Heart left ventricle (tissue), 16 donors: ENCODE measurements at regions of chr14 and their contacts with region 1.

Region 1: DNA sequence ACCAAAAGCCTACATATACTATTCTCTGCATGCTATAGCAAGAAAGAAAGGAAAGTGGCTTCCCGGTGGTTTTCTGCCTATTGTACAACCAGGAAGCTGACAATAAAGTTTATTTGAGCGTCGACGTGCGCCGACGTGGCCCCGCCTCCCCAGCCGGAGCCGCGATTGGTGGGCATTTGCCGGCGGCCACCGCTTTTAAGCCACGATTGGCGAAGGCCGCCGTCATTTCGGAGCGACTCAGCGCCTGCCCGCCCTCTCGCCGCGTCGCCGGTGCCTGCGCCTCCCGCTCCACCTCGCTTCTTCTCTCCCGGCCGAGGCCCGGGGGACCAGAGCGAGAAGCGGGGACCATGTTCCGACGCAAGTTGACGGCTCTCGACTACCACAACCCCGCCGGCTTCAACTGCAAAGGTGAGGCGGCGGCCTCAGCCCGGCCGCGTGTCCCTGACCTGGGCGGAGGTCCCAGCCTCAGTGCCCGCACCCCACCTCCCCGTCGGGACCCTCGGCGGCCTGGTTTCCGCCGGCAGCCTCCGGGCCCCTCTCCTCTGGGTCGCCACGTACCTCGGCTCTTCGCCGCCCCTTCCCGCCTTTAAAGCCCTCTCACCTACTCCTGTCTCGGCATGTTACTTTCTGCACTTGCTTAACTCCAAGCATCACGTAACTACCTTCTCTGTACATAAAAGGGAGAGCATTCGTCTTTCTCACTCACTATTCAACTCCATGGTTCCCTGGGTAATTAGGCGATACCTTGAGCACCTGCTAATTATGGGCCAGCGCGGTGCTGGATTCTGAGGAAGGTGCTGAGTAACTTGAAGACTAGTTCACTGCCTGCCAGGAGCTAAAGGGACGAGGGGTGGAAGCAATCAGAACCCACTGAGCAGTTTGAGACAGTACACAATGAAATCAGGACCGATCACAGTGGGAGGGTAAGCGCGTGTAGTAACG is at the start of gene RTRAF:
- DNase-seq: peak; percentile 96 to 97 (median 96)
- ATAC-seq: peak; percentile 97 to 100 (median 99)
- H3K4me3 ChIP-seq: peak within 1 kb of the TSS; percentile 58 to 98 (median 88)
- H3K27ac ChIP-seq: peak within 1 kb of the TSS; percentile 60 to 93 (median 86)
- H3K4me1 ChIP-seq: peaks cover 0 to 51% (median 27%) of the 10 kb centered on the region in 12 donors
- H3K27me3 ChIP-seq: no peaks in the 10 kb centered on the region
- CTCF ChIP-seq: peak in 1 of 12 donors; percentile 16
- POLR2A ChIP-seq: peak; percentile 49 to 90
- total RNA-seq, gene RTRAF: 72.9 to 260 (median 193) TPM

Region 2: DNA sequence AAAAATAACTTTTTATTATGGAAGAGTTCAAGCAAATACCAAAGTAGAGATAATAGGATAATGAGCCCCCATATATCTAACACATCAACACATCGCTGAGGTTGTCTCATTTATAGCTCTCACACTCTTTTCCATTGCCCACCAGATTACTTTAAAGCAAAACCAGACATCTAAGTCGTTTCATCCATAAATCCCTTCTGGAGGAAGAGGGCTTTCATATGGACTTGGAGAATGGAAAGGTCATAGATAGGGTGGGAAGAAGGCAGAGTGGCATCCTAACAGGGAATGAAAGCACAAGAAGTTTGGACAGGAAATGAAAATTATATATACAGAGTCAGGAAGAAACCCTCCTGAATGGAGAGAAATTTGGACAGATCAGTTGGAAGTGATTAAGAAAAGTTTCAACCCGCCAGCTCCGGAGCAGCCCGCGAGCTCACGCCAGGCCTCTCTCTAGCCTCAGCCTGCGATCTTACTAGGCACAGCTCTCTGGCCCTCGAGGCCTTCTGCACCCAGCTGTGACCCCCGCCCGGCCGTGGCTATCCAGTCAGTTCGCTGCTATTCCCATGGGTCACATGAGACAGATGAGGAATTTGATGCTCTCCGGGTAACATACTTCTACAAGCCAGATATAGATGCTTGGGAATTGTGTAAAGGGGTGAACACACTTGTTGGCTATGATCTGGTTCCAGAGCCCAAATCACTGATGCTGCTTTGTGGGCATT is 127.7 kb after region 1 on chr14:
- intact Hi-C with region 1: no loop called
- DNase-seq: peak in 3 of 5 donors; percentile 38 to 64 (median 61)
- ATAC-seq: peak in 1 of 4 donors; percentile 55
- H3K4me3 ChIP-seq: no peak overlapping the region
- H3K27ac ChIP-seq: peak overlapping the region in 2 of 12 donors; percentile 5 to 38
- H3K4me1 ChIP-seq: no peaks in the 10 kb centered on the region
- H3K27me3 ChIP-seq: no peaks in the 10 kb centered on the region
- CTCF ChIP-seq: no peak
- POLR2A ChIP-seq: no peak

Region 3: GRCh38 chr14:52131640-52132320 is 142.2 kb after region 1 on chr14:
- intact Hi-C with region 1: loop called in 3 of 10 experiments (anchors 2 to 5 kb)
- DNase-seq: peak; percentile 63 to 93 (median 83)
- ATAC-seq: peak; percentile 83 to 95 (median 93)
- H3K4me3 ChIP-seq: peak overlapping the region in 2 of 12 donors; percentile 5 to 13
- H3K27ac ChIP-seq: peak overlapping the region in 3 of 12 donors; percentile 23 to 48 (median 47)
- H3K4me1 ChIP-seq: peaks cover 0 to 13% (median 8%) of the 10 kb centered on the region in 12 donors
- H3K27me3 ChIP-seq: no peaks in the 10 kb centered on the region
- CTCF ChIP-seq: peak; percentile 58 to 87 (median 83)
- POLR2A ChIP-seq: no peak

Region 4: DNA sequence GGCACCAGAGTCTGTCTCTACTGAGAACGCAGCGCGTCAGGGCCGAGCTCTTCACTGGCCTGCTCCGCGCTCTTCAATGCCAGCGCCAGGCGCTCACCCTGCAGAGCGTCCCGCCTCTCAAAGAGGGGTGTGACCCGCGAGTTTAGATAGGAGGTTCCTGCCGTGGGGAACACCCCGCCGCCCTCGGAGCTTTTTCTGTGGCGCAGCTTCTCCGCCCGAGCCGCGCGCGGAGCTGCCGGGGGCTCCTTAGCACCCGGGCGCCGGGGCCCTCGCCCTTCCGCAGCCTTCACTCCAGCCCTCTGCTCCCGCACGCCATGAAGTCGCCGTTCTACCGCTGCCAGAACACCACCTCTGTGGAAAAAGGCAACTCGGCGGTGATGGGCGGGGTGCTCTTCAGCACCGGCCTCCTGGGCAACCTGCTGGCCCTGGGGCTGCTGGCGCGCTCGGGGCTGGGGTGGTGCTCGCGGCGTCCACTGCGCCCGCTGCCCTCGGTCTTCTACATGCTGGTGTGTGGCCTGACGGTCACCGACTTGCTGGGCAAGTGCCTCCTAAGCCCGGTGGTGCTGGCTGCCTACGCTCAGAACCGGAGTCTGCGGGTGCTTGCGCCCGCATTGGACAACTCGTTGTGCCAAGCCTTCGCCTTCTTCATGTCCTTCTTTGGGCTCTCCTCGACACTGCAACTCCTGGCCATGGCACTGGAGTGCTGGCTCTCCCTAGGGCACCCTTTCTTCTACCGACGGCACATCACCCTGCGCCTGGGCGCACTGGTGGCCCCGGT is 278.1 kb after region 1 on chr14 and contains the start of gene PTGDR:
- intact Hi-C with region 1: loop called in 1 of 10 experiments (anchors 10 kb)
- DNase-seq: peak; percentile 38 to 71 (median 47)
- ATAC-seq: peak; percentile 33 to 81 (median 62)
- H3K4me3 ChIP-seq: peak within 1 kb of the TSS; percentile 36 to 75 (median 58)
- H3K27ac ChIP-seq: peak within 1 kb of the TSS in 10 of 12 donors; percentile 11 to 78 (median 59)
- H3K4me1 ChIP-seq: peaks cover 0 to 43% (median 18%) of the 10 kb centered on the region in 12 donors
- H3K27me3 ChIP-seq: peaks cover 0 to 38% (median 9%) of the 10 kb centered on the region in 9 donors
- CTCF ChIP-seq: no peak
- POLR2A ChIP-seq: no peak
- total RNA-seq, gene PTGDR: 0.35 to 2.5 (median 1.3) TPM